ENCODE measurements at regions of chr4 and their contacts with region 1.

Region 1: GRCh38 chr4:76738086-76738931 is 159.6 kb downstream of the SOWAHB start:
- DNase-seq: peak; percentile 89
- H3K4me3 ChIP-seq: no peak overlapping the region
- H3K27me3 ChIP-seq: no peaks in the 10 kb centered on the region
- CTCF ChIP-seq: no peak

Region 2: DNA sequence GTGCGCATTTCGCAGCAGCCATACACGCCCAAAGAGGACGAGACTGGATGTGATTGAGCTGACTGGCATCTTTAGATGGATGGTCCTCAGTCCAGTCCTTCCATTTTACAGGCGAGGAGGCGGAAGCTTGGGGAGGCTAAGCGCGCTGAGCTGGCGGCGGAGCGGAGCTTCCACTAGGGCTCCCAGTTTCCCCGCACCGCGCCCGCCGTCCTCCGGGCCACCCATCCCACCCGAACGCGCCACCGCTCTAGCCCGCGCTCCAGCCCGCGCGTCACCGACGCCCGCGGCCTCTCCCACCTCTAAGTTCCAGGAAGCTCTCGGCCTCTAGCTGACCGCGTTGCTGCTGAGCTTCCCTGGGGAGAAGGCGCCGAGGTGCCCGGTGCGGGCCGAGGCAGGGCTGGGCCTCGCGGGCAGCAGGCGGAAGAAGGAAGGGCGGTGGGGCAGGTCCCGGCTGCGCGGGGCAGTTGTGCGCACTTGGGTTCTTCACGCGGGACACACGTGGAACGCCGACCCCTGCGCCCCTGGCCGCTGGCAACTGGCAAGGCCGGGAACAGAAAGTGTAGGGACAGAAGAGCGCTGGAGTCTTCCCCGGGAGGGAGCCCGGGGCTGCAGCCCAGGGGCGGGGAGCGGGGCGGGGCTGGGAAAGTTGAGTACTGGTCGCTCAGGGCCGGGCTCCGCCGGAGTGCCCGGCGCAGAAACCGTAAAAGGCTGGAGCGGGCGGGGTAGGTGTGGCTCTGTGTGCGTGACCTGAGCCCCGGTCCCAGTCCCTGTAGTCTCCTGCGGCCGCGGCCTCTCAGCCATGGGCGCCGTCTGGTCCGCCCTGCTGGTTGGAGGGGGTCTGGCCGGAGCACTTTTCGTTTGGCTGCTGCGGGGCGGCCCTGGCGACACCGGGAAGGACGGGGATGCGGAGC is 432.1 kb before region 1 on chr4 and contains the start of gene STBD1:
- CTCF ChIA-PET with region 1: no interaction called
- POLR2A ChIA-PET with region 1: no interaction called
- DNase-seq: no peak
- H3K4me3 ChIP-seq: peak within 1 kb of the TSS; percentile 87
- H3K27me3 ChIP-seq: no peaks in the 10 kb centered on the region
- CTCF ChIP-seq: 0 out of 2 replicates have a peak, but pooled peaks have one; percentile 13
- polyA plus RNA-seq, gene STBD1: 4.2 and 4.4 TPM in 2 replicates

Region 3: DNA sequence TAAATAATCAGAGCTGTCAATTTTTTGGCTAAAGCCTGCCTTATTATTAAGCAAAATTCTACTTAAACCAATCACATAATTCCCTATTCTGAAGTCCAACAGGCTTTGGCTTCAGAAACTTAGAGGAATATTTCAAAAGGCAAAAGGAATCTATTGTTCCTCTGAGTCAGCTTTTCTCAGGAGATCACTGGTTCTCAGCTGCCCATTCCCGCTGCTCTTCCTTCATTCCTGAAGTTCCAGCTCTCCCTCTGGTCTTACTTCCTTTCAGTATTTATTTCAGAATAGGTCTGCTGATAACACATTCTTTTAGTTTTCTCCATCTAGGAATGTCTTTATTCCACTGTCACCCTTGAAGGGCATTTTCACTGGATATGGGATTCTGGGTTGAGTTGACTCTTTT is 25.9 kb after region 1 on chr4:
- CTCF ChIA-PET with region 1: no interaction called
- POLR2A ChIA-PET with region 1: interaction called, 11 read pairs
- DNase-seq: peak; percentile 70
- H3K4me3 ChIP-seq: no peak overlapping the region
- H3K27me3 ChIP-seq: no peaks in the 10 kb centered on the region
- CTCF ChIP-seq: no peak

Region 4: GRCh38 chr4:76896731-76897535 is 158.6 kb after region 1 on chr4:
- CTCF ChIA-PET with region 1: no interaction called
- POLR2A ChIA-PET with region 1: no interaction called
- DNase-seq: no peak
- H3K4me3 ChIP-seq: peak overlapping the region; percentile 32
- H3K27me3 ChIP-seq: peaks cover 18% of the 10 kb centered on the region
- CTCF ChIP-seq: no peak

Measured in BJ (cell line).